Activated CD4-positive, alpha-beta T cell treated with anti-CD3 and anti-CD28 coated beads, Interleukin-2, amount 10 ng/mL, durations not matched to agents 7 days and 5 days (primary cell): ENCODE measurements at regions of chr19 and their contacts with region 1.

Region 1: GRCh38 chr19:46990991-46991676 is 28.5 kb upstream of the NPAS1 start:
- DNase-seq: peak; percentile 64
- H3K4me3 Mint-ChIP-seq: peak overlapping the region; percentile 22
- H3K27ac Mint-ChIP-seq: peak overlapping the region; percentile 83
- H3K4me1 Mint-ChIP-seq: peaks cover 14% of the 10 kb centered on the region
- H3K27me3 Mint-ChIP-seq: no peaks in the 10 kb centered on the region

Region 2: GRCh38 chr19:47002107-47002766 is 11.1 kb after region 1 on chr19:
- CTCF ChIA-PET with region 1: interaction called, 11 read pairs
- POLR2A ChIA-PET with region 1: no interaction called
- DNase-seq: no peak
- H3K4me3 Mint-ChIP-seq: no peak overlapping the region
- H3K27ac Mint-ChIP-seq: no peak overlapping the region
- H3K4me1 Mint-ChIP-seq: peaks cover 3% of the 10 kb centered on the region
- H3K27me3 Mint-ChIP-seq: peaks cover 21% of the 10 kb centered on the region